ENCODE measurements at regions of chr12 and their contacts with region 1.

Region 1: GRCh38 chr12:56359851-56360767 is at the start of gene STAT2:
- H3K4me3 ChIP-seq: peak within 1 kb of the TSS; percentile 84
- H3K27ac ChIP-seq: peak within 1 kb of the TSS; percentile 53
- H3K4me1 ChIP-seq: no peaks in the 10 kb centered on the region; the same call in 1 of the 2 replicates
- CTCF ChIP-seq: no peak

Region 2: DNA sequence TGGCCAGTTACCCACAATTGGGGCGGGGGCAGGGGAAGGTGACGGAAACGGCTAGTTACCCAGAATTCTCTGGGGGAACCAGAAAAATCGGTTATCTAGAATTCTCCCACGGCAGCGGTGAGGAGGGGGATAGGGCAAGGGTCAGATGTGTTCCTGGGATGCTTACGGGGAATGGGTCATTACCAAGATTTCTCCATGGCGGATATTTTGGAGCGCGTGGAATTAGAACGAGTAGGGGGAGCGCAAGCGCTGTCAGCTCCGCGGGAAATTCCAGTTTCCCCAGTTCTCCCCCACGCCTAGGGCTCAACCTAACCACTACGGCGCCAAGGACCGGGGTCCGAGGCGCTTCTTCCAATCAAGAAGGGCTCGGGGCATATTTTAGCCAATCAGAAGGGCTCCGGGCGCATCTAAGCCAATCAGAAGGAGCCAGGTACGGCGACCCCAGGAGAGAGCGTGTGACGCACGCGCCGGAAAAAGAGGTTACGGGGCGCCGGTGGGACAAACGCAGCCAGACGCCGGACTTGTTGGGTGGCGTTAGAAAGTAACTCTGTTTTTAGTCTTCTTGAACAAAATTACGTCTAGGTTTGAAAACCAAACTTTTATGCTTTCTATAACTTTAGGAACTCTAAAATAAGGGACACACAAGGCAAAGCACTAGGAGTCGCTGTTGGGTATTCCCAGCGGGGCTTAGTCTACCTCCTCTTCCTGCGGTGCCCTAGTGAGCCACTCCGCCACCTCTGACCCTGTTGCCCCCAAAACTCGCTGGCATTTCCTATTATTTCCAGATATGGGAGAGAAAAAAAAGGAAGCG is 26.2 kb before region 1 on chr12 and contains the start of gene PAN2:
- CTCF ChIA-PET with region 1: no interaction called
- POLR2A ChIA-PET with region 1: interaction called, 32 read pairs
- H3K4me3 ChIP-seq: peak within 1 kb of the TSS; percentile 63
- H3K27ac ChIP-seq: peak within 1 kb of the TSS; percentile 80
- H3K4me1 ChIP-seq: peaks cover 5% of the 10 kb centered on the region
- CTCF ChIP-seq: peak; percentile 68

Region 3: GRCh38 chr12:56391721-56392120 is 31.6 kb after region 1 on chr12:
- CTCF ChIA-PET with region 1: interaction called, 7 read pairs
- POLR2A ChIA-PET with region 1: interaction called, 11 read pairs
- H3K4me3 ChIP-seq: no peak overlapping the region
- H3K27ac ChIP-seq: no peak overlapping the region
- H3K4me1 ChIP-seq: no peaks in the 10 kb centered on the region; the same call in 1 of the 2 replicates
- CTCF ChIP-seq: no peak

Region 4: DNA sequence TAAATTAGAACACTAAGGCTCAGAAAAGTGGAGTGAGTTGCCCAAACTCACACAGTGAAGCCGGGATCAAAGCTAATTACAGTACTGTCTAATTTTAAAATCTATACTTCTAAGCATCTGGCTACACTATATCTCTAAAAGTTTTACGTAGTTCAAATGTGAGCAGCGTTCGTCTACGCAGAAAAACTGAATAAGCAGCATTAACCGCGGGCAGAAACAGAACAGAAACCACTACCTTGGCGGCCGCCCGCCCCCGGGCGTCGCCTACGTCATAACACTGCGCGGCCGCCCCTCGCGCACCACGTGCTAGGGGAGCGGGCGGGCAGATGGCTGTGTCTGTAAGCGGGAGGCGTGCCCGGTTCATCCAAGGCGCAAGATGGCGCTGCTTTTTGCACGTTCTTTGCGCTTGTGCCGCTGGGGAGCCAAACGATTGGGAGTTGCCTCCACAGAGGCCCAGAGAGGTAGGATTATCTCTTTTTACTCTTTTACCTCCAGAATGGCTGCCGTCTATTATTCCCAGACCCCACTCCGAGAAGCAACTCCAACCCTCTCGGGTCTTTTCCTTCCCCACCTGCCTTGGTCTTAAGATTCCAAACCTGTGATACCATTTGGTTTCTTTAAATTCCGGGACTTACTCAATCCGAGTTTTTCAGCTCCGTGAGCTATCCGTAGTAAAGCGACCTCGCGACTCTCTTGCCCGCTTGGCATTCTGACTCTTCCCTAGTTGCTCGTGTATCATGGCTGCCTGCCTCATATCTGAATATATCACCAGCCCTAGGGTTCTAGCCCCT is 108.3 kb after region 1 on chr12 and contains the start of gene SPRYD4:
- CTCF ChIA-PET with region 1: interaction called, 15 read pairs
- POLR2A ChIA-PET with region 1: interaction called, 8 read pairs
- H3K4me3 ChIP-seq: peak within 1 kb of the TSS; percentile 88
- H3K27ac ChIP-seq: peak within 1 kb of the TSS; percentile 38; the same call in 1 of the 2 replicates
- H3K4me1 ChIP-seq: no peaks in the 10 kb centered on the region
- CTCF ChIP-seq: peak; percentile 94